H1 (cell line): ENCODE measurements at regions of chr1 and their contacts with region 1.

Region 1: GRCh38 chr1:202213361-202214088 is 19.9 kb downstream of the LGR6 start:
- DNase-seq: peak in 1 of 2 experiments; percentile 60
- H3K4me3 ChIP-seq: peak overlapping the region; percentile 60 to 74 (median 62)
- H3K27ac ChIP-seq: no peak overlapping the region
- H3K4me1 ChIP-seq: peaks cover 0 to 3% (median 1%) of the 10 kb centered on the region in 4 experiments; a peak in 5 of 7 replicates
- H3K27me3 ChIP-seq: peaks cover 2 to 10% (median 8%) of the 10 kb centered on the region in 4 experiments; a peak in 6 of 7 replicates
- CTCF ChIP-seq: peak; percentile 72 to 97 (median 88)
- EP300 ChIP-seq: no peak
- POLR2A ChIP-seq: no peak
- RAD21 ChIP-seq: peak; percentile 52 to 69

Region 2: GRCh38 chr1:202176949-202177927 is 36.3 kb before region 1 on chr1:
- CTCF ChIA-PET with region 1: interaction called, 25 read pairs
- POLR2A ChIA-PET with region 1: no interaction called
- DNase-seq: no peak
- H3K4me3 ChIP-seq: no peak overlapping the region
- H3K27ac ChIP-seq: no peak overlapping the region
- H3K4me1 ChIP-seq: no peaks in the 10 kb centered on the region; a peak in 1 of 7 replicates
- H3K27me3 ChIP-seq: no peaks in the 10 kb centered on the region
- CTCF ChIP-seq: peak; percentile 41 to 51 (median 44)
- EP300 ChIP-seq: no peak
- POLR2A ChIP-seq: no peak
- RAD21 ChIP-seq: peak in 1 of 2 experiments; percentile 27; a peak in 1 of 4 replicates

Region 3: GRCh38 chr1:202291961-202292712 is 78.6 kb after region 1 on chr1:
- CTCF ChIA-PET with region 1: interaction called, 10 read pairs
- POLR2A ChIA-PET with region 1: no interaction called
- DNase-seq: no peak
- H3K4me3 ChIP-seq: no peak overlapping the region
- H3K27ac ChIP-seq: no peak overlapping the region
- H3K4me1 ChIP-seq: no peaks in the 10 kb centered on the region
- H3K27me3 ChIP-seq: no peaks in the 10 kb centered on the region
- CTCF ChIP-seq: no peak
- EP300 ChIP-seq: no peak
- POLR2A ChIP-seq: no peak
- RAD21 ChIP-seq: no peak

Region 4: DNA sequence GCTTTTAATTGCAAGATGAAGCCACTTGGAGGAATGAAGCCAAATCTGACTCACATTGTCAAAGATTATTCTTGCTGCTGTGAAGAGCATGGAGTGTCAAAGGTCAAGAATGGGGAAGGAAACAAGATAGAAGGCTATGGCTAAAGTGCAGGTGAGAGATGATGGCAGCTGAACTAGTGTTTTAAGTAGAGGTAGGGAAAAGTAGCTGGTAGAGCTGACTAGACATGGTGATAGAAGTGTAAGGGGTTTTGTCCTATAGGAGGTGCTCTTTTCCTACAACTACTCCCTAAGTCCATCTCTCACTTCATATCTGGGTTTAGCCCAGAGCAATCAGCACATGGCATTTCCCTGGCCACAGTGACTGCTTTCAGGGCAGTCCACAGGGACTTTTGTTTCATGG is 116.4 kb after region 1 on chr1:
- CTCF ChIA-PET with region 1: interaction called, 10 read pairs
- POLR2A ChIA-PET with region 1: interaction called, 3 read pairs
- DNase-seq: no peak
- H3K4me3 ChIP-seq: no peak overlapping the region
- H3K27ac ChIP-seq: no peak overlapping the region
- H3K4me1 ChIP-seq: no peaks in the 10 kb centered on the region; a peak in 1 of 7 replicates
- H3K27me3 ChIP-seq: no peaks in the 10 kb centered on the region
- CTCF ChIP-seq: peak in 2 of 3 experiments; percentile 35 to 63; a peak in 3 of 4 replicates
- EP300 ChIP-seq: no peak
- POLR2A ChIP-seq: no peak
- RAD21 ChIP-seq: peak; percentile 43 to 62